ENCODE measurements at regions of chr4 and their contacts with region 1.

Region 1: DNA sequence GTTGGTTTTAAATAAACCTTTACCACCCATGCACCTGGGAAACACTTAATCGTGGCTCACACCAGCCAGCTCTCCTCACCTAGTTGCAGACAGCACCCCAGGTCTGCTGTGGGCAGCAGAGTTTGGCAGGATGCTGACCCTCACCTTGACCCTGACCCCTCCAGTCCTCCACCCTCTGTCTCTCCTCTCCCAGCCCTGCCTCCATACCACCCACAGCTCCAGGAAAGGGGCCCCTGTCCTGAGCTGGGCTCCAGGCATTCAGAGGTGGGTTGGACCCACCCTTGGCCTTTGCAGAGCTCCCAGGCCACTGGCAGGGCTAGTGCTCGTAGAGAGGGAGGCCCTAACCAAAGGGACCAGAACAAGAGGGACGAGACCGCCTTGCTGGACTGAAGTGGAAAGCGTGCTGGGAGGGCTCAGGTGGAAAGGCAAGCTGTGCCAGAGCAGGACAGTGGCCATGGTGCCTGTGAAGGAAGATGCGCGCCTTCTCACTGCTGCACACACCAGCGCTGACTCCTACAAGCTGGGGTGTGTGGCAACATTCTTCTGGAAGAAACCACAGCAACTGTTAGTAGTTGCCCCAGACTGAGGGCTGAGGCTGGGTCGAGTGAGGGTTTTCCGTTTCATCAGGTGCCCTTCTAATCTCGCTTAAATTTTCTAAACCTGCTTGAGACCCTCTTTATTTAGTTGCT is 10.7 kb upstream of the S100P start:
- DNase-seq: no peak
- H3K4me3 ChIP-seq: no peak overlapping the region
- H3K4me3 Mint-ChIP-seq: no peak overlapping the region
- H3K27ac ChIP-seq: no peak overlapping the region
- H3K27ac Mint-ChIP-seq: peak overlapping the region in 5 of 8 donors; percentile 45 to 89 (median 51)
- H3K4me1 ChIP-seq: peaks cover 7% of the 10 kb centered on the region
- H3K4me1 Mint-ChIP-seq: peaks cover 37 to 67% (median 61%) of the 10 kb centered on the region in 3 donors
- H3K27me3 ChIP-seq: no peaks in the 10 kb centered on the region
- H3K27me3 Mint-ChIP-seq: no peaks in the 10 kb centered on the region

Region 2: DNA sequence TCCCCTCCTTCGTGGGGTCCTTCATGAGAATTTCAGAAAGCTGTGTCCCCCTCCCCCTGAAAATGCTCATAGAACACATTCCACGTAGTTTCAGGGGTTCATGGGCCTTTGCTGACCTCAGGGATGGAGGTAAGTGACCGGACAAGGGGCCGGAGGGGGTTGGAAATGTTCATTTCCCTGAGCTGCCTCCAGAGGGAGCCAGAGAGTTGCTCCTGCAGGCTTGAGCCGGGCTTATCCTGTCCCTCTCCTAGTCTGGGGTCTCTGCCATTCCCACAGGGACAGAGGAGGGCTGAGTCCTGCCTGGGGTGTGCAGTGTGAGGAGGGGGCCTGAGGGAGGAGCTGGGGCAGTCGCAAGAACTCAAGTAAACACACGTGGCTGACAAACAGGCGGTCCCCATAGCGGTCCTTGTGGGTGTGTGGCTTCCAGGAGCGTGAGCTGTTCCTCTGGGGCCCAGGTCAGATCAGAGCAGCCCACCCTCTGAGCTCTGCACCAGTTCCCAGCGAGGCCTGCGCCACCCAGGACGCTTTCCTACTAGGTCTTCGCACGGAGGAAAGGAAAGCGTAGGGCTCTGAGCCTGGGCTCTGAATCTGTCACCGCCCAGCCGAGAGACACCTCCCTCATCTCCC is 350.9 kb before region 1 on chr4:
- CTCF ChIA-PET with region 1: no interaction called
- POLR2A ChIA-PET with region 1: no interaction called
- DNase-seq: peak in 2 of 5 donors; percentile 19 to 25
- H3K4me3 ChIP-seq: no peak overlapping the region
- H3K4me3 Mint-ChIP-seq: no peak overlapping the region
- H3K27ac ChIP-seq: no peak overlapping the region
- H3K27ac Mint-ChIP-seq: no peak overlapping the region
- H3K4me1 ChIP-seq: peaks cover under 1% of the 10 kb centered on the region
- H3K4me1 Mint-ChIP-seq: peaks cover 2 to 3% (median 3%) of the 10 kb centered on the region in 3 donors
- H3K27me3 ChIP-seq: no peaks in the 10 kb centered on the region
- H3K27me3 Mint-ChIP-seq: peaks cover 16 to 35% of the 10 kb centered on the region in 2 donors

Region 3: DNA sequence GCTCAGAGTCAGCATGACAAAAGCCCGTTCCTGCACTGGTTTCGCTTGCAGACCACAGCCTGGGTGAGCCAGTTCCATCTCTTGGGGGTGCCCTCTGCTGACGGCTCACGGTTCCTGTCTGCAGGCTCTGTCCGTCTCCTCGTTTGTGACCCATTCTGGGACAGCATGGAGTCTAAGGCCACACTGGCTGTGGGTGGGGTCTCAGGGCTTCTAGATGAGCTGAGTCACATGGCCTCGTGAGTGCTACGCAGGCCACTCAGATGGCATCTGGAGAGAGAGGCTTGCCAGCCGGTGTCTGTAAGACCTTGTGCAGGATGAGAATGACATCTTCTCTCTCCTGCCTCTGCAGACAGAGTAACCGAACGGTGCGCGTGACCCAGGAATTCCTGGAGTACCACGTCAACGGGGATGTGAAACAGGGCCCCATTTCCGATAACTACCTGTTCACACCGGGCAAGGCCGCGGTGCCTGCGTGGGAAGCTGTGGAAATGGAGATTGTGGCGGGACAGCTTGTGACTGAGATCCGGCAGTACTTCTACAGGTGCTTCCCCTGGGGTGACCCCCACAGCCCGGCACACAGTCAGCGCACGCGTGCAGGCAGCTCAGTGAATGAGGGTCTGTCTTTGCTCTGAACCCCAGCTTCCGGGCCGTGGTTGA is 74.1 kb before region 1 on chr4:
- CTCF ChIA-PET with region 1: no interaction called
- POLR2A ChIA-PET with region 1: no interaction called
- DNase-seq: peak in 3 of 5 donors; percentile 3 to 54 (median 28)
- H3K4me3 ChIP-seq: no peak overlapping the region
- H3K4me3 Mint-ChIP-seq: peak overlapping the region in 3 of 7 donors; percentile 19 to 37 (median 29)
- H3K27ac ChIP-seq: no peak overlapping the region
- H3K27ac Mint-ChIP-seq: peak overlapping the region in 7 of 8 donors; percentile 38 to 95 (median 69)
- H3K4me1 ChIP-seq: no peaks in the 10 kb centered on the region
- H3K4me1 Mint-ChIP-seq: peaks cover 12 to 21% (median 20%) of the 10 kb centered on the region in 3 donors
- H3K27me3 ChIP-seq: no peaks in the 10 kb centered on the region
- H3K27me3 Mint-ChIP-seq: no peaks in the 10 kb centered on the region

Region 4: DNA sequence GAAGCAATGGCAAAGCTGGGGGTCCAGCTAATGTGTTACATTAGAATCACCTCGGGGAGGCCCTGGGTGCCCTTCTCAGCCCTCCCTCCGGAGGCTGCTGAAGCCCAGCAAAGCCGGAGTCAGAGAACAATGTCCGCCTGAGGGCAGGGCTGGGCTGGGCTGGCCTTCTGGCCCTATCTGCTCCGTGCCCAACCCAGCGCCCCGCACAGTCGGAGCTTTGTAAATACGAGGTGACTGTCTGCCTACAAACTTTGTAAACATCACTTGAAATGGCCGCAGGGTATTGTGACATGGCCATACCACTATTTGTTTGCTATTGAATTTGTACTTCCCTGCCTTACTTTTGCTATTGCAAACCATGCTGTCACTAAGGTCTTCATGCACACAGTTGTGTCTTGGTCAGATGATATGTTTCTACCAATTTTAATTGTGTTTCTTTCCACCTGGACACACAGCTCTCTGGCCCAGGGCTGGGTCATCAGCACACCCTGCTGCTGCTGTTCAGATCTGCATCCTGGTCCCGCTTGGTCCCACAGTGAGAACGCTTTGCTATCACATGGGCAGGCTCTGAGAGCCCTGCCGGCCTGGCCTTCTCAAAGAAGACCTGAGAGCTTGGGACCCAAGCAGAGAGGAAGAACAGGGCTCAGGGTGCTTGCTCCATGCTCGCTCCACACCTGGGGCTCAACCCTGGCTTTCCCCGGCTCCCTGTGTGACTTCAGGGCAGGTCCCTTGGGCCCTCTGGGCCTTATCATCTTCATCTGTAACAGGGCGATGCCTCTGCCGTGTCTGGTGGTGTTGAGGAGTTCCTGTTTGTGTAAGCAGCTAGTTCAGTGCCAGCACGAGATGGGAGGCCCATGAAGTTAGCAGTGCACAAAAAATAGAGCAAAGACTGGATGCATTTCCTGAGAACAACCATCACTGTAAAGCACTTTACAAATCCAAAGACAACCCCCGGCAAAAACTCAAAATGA is 12.9 kb after region 1 on chr4:
- CTCF ChIA-PET with region 1: interaction called, 369 read pairs
- POLR2A ChIA-PET with region 1: interaction called, 6 read pairs
- DNase-seq: peak; percentile 47 to 80 (median 71)
- H3K4me3 ChIP-seq: peak overlapping the region; percentile 45
- H3K4me3 Mint-ChIP-seq: peak overlapping the region; percentile 5 to 92 (median 65)
- H3K27ac ChIP-seq: peak overlapping the region; percentile 40
- H3K27ac Mint-ChIP-seq: peak overlapping the region; percentile 86 to 99 (median 95)
- H3K4me1 ChIP-seq: peaks cover 89% of the 10 kb centered on the region
- H3K4me1 Mint-ChIP-seq: peaks cover 74 to 88% (median 85%) of the 10 kb centered on the region in 3 donors
- H3K27me3 ChIP-seq: no peaks in the 10 kb centered on the region
- H3K27me3 Mint-ChIP-seq: peaks cover 0 to 3% of the 10 kb centered on the region in 2 donors

Region 5: GRCh38 chr4:6701371-6701770 is 18.4 kb after region 1 on chr4:
- CTCF ChIA-PET with region 1: interaction called, 369 read pairs
- POLR2A ChIA-PET with region 1: interaction called, 5 read pairs
- DNase-seq: peak in 2 of 5 donors; percentile 36 to 44
- H3K4me3 ChIP-seq: no peak overlapping the region
- H3K4me3 Mint-ChIP-seq: no peak overlapping the region
- H3K27ac ChIP-seq: no peak overlapping the region
- H3K27ac Mint-ChIP-seq: peak overlapping the region in 5 of 8 donors; percentile 47 to 90 (median 61)
- H3K4me1 ChIP-seq: peaks cover 60% of the 10 kb centered on the region
- H3K4me1 Mint-ChIP-seq: peaks cover 63 to 81% (median 77%) of the 10 kb centered on the region in 3 donors
- H3K27me3 ChIP-seq: no peaks in the 10 kb centered on the region
- H3K27me3 Mint-ChIP-seq: peaks cover 0 to 3% of the 10 kb centered on the region in 2 donors